ENCODE measurements at regions of chr12 and their contacts with region 1.

Region 1: DNA sequence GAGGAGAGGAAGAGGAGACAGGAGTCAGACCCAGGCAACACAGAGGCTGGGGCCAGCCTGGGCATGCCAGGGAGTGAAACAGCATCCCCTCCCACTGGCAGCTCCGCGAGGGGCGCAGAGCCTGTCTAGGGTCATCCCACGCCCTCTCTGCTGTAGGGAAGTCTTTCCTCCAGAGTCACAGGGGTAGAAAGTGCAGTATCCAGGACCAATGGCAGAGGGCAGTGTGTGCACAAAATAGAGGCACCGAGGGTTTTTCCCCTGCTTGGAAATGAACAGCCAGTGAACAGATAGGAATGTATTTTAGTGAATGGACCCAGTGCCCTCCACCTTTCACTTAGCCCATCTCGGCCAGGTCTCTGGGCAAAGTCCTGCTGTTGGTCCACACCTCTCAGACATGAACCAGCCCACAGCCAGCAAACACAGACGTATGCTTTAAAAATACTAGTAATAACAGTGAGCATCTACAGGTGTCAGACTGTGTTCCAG is 9.4 kb upstream of the KRT74 start:
- DNase-seq: peak; percentile 63
- H3K4me3 ChIP-seq: no peak overlapping the region
- H3K27ac ChIP-seq: no peak overlapping the region
- H3K4me1 ChIP-seq: no peaks in the 10 kb centered on the region
- H3K27me3 ChIP-seq: no peaks in the 10 kb centered on the region
- CTCF ChIP-seq: peak; percentile 50 to 83 (median 69)
- EP300 ChIP-seq: no peak
- POLR2A ChIP-seq: no peak

Region 2: GRCh38 chr12:52634266-52635056 is 51.4 kb after region 1 on chr12:
- in situ Hi-C with region 1: no loop called
- intact Hi-C with region 1: no loop called
- DNase-seq: no peak
- H3K4me3 ChIP-seq: no peak overlapping the region
- H3K27ac ChIP-seq: no peak overlapping the region
- H3K4me1 ChIP-seq: no peaks in the 10 kb centered on the region
- H3K27me3 ChIP-seq: peaks cover 5% of the 10 kb centered on the region
- CTCF ChIP-seq: no peak
- EP300 ChIP-seq: no peak
- POLR2A ChIP-seq: no peak

Region 3: GRCh38 chr12:52870351-52871290 is 287.6 kb after region 1 on chr12:
- in situ Hi-C with region 1: loop called in 3 of 4 experiments (anchors 5 to 10 kb)
- intact Hi-C with region 1: loop called (anchors 5 kb)
- DNase-seq: peak; percentile 91
- H3K4me3 ChIP-seq: no peak overlapping the region
- H3K27ac ChIP-seq: peak overlapping the region; percentile 73 to 97 (median 90)
- H3K4me1 ChIP-seq: peaks cover 20 to 61% (median 59%) of the 10 kb centered on the region in 4 donors
- H3K27me3 ChIP-seq: no peaks in the 10 kb centered on the region
- CTCF ChIP-seq: peak; percentile 57 to 92 (median 72)
- EP300 ChIP-seq: no peak
- POLR2A ChIP-seq: no peak